ENCODE measurements at regions of chr9 and their contacts with region 1.

Region 1: GRCh38 chr9:129626079-129626624 is at the start of gene NTMT1:
- DNase-seq: peak; percentile 88 to 97 (median 91)
- ATAC-seq: peak; percentile 73 to 78
- H3K4me3 Mint-ChIP-seq: peak within 1 kb of the TSS; percentile 82 to 97 (median 90)
- H3K27ac Mint-ChIP-seq: peak within 1 kb of the TSS; percentile 85 to 98 (median 96)
- H3K4me1 Mint-ChIP-seq: peaks cover 29 to 64% (median 60%) of the 10 kb centered on the region in 4 donors
- H3K27me3 Mint-ChIP-seq: peaks cover 2 to 20% (median 6%) of the 10 kb centered on the region in 5 donors
- polyA plus RNA-seq, gene NTMT1: 40.8 to 57.8 (median 45.2) TPM

Region 2: DNA sequence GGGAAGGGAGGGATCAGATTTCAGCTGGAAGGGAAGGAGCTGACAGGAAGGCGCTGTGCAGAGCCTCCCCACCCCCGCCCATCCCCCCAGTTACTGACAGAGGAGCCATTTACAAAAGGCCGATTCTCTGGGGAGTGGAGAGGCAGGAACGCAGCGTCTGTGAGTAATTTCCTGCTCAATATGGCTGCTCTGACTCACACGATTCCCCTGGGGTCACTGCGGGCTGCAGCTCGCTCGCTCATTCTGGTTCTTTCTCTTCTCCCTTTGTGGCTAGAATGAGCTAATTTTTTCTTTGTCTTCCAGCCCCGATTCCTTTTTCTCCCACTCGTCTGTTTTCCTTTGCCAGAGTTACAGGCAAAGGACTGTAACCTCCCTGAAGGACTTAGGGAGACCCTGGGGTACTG is 486.2 kb before region 1 on chr9:
- POLR2A ChIA-PET with region 1: interaction called, 25 read pairs
- DNase-seq: peak; percentile 51 to 88 (median 66)
- ATAC-seq: peak; percentile 86
- H3K4me3 Mint-ChIP-seq: peak overlapping the region; percentile 83 to 96 (median 92)
- H3K27ac Mint-ChIP-seq: peak overlapping the region; percentile 92 to 99 (median 98)
- H3K4me1 Mint-ChIP-seq: peaks cover 16 to 43% (median 34%) of the 10 kb centered on the region in 4 donors
- H3K27me3 Mint-ChIP-seq: no peaks in the 10 kb centered on the region

Region 3: GRCh38 chr9:129291041-129291501 is 335.1 kb before region 1 on chr9:
- POLR2A ChIA-PET with region 1: no interaction called
- DNase-seq: no peak
- ATAC-seq: no peak
- H3K4me3 Mint-ChIP-seq: no peak overlapping the region
- H3K27ac Mint-ChIP-seq: no peak overlapping the region
- H3K4me1 Mint-ChIP-seq: peaks cover 0 to 8% (median 3%) of the 10 kb centered on the region in 4 donors
- H3K27me3 Mint-ChIP-seq: no peaks in the 10 kb centered on the region

Region 4: GRCh38 chr9:129641746-129642513 is 15.8 kb after region 1 on chr9 and contains the start of gene ASB6:
- POLR2A ChIA-PET with region 1: interaction called, 51 read pairs
- DNase-seq: peak; percentile 72 to 96 (median 89)
- ATAC-seq: peak; percentile 84 to 86
- H3K4me3 Mint-ChIP-seq: peak within 1 kb of the TSS; percentile 78 to 90 (median 84)
- H3K27ac Mint-ChIP-seq: peak within 1 kb of the TSS; percentile 76 to 96 (median 90)
- H3K4me1 Mint-ChIP-seq: peaks cover 10 to 22% (median 20%) of the 10 kb centered on the region in 4 donors
- H3K27me3 Mint-ChIP-seq: no peaks in the 10 kb centered on the region
- polyA plus RNA-seq, gene ASB6: 14.8 to 29.1 (median 19.8) TPM

Measured in naive thymus-derived CD8-positive, alpha-beta T cell (primary cell).